Endothelial cell of umbilical vein (primary cell): ENCODE measurements at regions of chr3 and their contacts with region 1.

Region 1: GRCh38 chr3:133040696-133041523 is 2.7 kb downstream of the TMEM108 start:
- DNase-seq: peak; percentile 64
- H3K4me3 ChIP-seq: no peak overlapping the region
- H3K27ac ChIP-seq: no peak overlapping the region
- H3K4me1 ChIP-seq: peaks cover 7% of the 10 kb centered on the region
- H3K27me3 ChIP-seq: peaks cover 23 to 33% of the 10 kb centered on the region in 2 experiments
- CTCF ChIP-seq: peak; percentile 70 to 71
- POLR2A ChIP-seq: no peak

Region 2: GRCh38 chr3:132722164-132723024 is 318.5 kb before region 1 on chr3 and contains the start of gene NPHP3:
- CTCF ChIA-PET with region 1: interaction called, 32 read pairs
- POLR2A ChIA-PET with region 1: no interaction called
- dilution Hi-C with region 1: no loop called
- intact Hi-C with region 1: loop called (anchors 2 kb)
- DNase-seq: peak; percentile 93
- H3K4me3 ChIP-seq: peak within 1 kb of the TSS; percentile 86 to 98 (median 93)
- H3K27ac ChIP-seq: peak within 1 kb of the TSS; percentile 63
- H3K4me1 ChIP-seq: peaks cover 26% of the 10 kb centered on the region
- H3K27me3 ChIP-seq: no peaks in the 10 kb centered on the region
- CTCF ChIP-seq: no peak
- POLR2A ChIP-seq: peak; percentile 92
- total RNA-seq, gene NPHP3: 30.0 and 30.3 TPM in 2 replicates

Region 3: DNA sequence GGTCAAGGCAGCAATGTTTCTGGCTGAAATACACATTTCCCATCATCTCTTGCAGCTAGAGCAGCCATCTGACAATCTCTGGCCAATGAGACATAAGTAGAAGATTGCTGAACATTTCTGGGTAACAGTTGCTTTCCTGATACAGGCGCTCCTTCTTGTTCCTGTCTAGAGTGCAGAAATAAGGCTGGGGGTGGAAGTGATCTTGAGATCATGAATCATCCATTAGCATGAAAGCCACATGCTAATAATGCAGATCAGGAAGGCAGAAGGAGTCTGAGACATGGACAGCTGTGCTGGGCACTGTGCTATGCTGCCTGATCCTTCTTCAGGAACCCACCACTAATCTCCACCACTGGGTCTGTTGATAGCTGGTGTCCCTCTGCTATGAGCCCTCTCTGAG is 17.5 kb before region 1 on chr3:
- CTCF ChIA-PET with region 1: interaction called, 15 read pairs
- POLR2A ChIA-PET with region 1: no interaction called
- dilution Hi-C with region 1: no loop called
- intact Hi-C with region 1: no loop called
- DNase-seq: no peak
- H3K4me3 ChIP-seq: no peak overlapping the region
- H3K27ac ChIP-seq: no peak overlapping the region
- H3K4me1 ChIP-seq: no peaks in the 10 kb centered on the region
- H3K27me3 ChIP-seq: peaks cover 0 to 2% of the 10 kb centered on the region in 2 experiments
- CTCF ChIP-seq: no peak
- POLR2A ChIP-seq: no peak

Region 4: GRCh38 chr3:133301194-133301593 is 260.3 kb after region 1 on chr3:
- CTCF ChIA-PET with region 1: no interaction called
- POLR2A ChIA-PET with region 1: no interaction called
- dilution Hi-C with region 1: no loop called
- intact Hi-C with region 1: loop called (anchors 5 kb)
- DNase-seq: peak; percentile 76
- H3K4me3 ChIP-seq: peak overlapping the region in 2 of 3 experiments; percentile 3 to 30
- H3K27ac ChIP-seq: peak overlapping the region; percentile 14
- H3K4me1 ChIP-seq: peaks cover 38% of the 10 kb centered on the region
- H3K27me3 ChIP-seq: no peaks in the 10 kb centered on the region
- CTCF ChIP-seq: no peak
- POLR2A ChIP-seq: no peak

Region 5: GRCh38 chr3:133377396-133377795 is 336.5 kb after region 1 on chr3:
- CTCF ChIA-PET with region 1: interaction called, 528 read pairs
- POLR2A ChIA-PET with region 1: no interaction called
- dilution Hi-C with region 1: no loop called
- intact Hi-C with region 1: loop called (anchors 1 kb)
- DNase-seq: peak; percentile 52
- H3K4me3 ChIP-seq: no peak overlapping the region
- H3K27ac ChIP-seq: no peak overlapping the region
- H3K4me1 ChIP-seq: no peaks in the 10 kb centered on the region
- H3K27me3 ChIP-seq: no peaks in the 10 kb centered on the region
- CTCF ChIP-seq: peak; percentile 39 to 41
- POLR2A ChIP-seq: no peak

Region 6: GRCh38 chr3:133413161-133414020 is 372.5 kb after region 1 on chr3:
- CTCF ChIA-PET with region 1: interaction called, 12 read pairs
- POLR2A ChIA-PET with region 1: no interaction called
- dilution Hi-C with region 1: no loop called
- intact Hi-C with region 1: no loop called
- DNase-seq: no peak
- H3K4me3 ChIP-seq: no peak overlapping the region
- H3K27ac ChIP-seq: no peak overlapping the region
- H3K4me1 ChIP-seq: no peaks in the 10 kb centered on the region
- H3K27me3 ChIP-seq: peaks cover 7 to 10% of the 10 kb centered on the region in 2 experiments
- CTCF ChIP-seq: no peak
- POLR2A ChIP-seq: no peak

Region 7: DNA sequence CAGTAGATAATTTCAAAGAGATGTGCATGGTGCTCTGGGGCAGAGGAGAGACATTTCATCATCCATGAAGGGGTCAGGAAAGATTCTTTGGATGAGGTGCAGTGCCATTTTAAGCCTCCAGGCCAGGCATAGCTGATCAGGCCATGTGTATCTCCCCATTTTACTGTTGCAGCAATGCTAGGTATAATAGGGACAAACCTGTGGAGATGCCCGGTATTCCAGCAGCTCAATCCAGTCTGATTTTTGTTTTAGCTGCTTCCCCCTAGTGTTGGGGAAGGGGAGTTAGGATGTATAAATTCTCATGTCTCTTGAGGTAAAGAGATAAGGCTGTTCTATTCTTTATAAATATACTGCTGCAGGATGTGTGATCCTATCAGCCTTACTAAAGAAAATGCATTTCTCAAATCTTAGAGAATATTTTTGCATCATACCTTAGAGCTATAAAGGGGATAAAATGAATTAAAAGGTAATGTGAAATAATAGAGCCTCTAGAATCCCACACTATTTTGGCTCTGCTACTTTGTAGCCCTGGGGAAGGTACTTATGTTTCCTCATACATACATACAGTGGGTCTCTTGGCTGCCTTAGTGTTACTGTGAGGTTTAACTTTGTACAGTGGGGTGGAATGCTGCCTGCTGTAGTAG is 537.8 kb after region 1 on chr3:
- CTCF ChIA-PET with region 1: interaction called, 7 read pairs
- POLR2A ChIA-PET with region 1: no interaction called
- dilution Hi-C with region 1: no loop called
- intact Hi-C with region 1: loop called (anchors 2 kb)
- DNase-seq: peak; percentile 53
- H3K4me3 ChIP-seq: no peak overlapping the region
- H3K27ac ChIP-seq: no peak overlapping the region
- H3K4me1 ChIP-seq: peaks cover 26% of the 10 kb centered on the region
- H3K27me3 ChIP-seq: no peaks in the 10 kb centered on the region
- CTCF ChIP-seq: peak; percentile 49 to 56
- POLR2A ChIP-seq: no peak